Psoas muscle (tissue), 8 donors: ENCODE measurements at regions of chr4 and their contacts with region 1.

Region 1: DNA sequence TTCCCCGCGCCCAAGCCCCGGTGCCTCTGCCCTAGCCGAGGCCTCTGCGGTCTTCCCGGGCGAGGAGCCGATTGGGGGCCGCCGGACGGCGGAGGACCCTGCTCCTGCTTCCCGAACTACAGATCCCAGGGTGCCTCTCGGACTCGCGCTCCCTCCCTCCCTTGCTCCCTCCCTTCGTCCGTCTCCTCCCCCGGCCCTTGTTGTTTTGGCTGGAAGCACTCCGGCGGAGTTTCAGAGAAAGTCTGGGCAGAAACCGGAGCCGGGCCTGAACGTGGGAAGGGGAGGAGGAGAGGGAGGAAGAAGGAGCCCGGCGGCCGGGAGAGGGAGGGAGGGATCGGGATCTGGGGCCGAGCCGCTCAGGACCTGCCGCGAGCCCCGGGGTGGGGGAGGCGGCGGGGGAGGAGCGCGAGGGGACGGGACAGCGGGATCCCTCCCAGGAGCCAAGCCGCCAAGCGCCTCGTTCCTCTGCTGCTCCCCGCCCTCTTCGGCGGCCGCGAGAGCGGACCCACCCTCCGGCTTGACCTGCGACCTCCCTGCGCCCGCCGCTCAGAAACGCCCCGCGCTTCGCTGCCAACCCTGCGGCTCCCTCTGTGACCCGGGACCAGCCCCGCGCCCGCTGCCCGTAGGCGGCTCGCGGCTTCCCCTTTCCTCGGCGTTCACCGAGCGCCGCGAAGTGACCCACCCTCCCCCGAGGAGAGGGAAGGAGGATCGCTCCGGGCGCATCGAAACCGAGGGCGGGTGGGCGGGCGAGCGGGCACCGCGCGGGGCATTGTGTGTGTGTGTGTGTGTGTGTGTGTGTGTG is 496 bp upstream of the GAB1 start:
- DNase-seq: peak; percentile 89 to 93
- ATAC-seq: peak; percentile 86 to 88 (median 86)
- H3K4me3 ChIP-seq: peak overlapping the region; percentile 97
- H3K27ac ChIP-seq: peak overlapping the region; percentile 97
- H3K4me1 ChIP-seq: peaks cover 27% of the 10 kb centered on the region
- H3K27me3 ChIP-seq: no peaks in the 10 kb centered on the region
- CTCF ChIP-seq: no peak

Region 2: GRCh38 chr4:143133977-143134376 is 202.2 kb before region 1 on chr4:
- intact Hi-C with region 1: no loop called
- DNase-seq: no peak
- ATAC-seq: no peak
- H3K4me3 ChIP-seq: no peak overlapping the region
- H3K27ac ChIP-seq: no peak overlapping the region
- H3K4me1 ChIP-seq: no peaks in the 10 kb centered on the region
- H3K27me3 ChIP-seq: no peaks in the 10 kb centered on the region
- CTCF ChIP-seq: no peak

Region 3: GRCh38 chr4:143148521-143148920 is 187.7 kb before region 1 on chr4:
- intact Hi-C with region 1: no loop called
- DNase-seq: no peak
- ATAC-seq: no peak
- H3K4me3 ChIP-seq: no peak overlapping the region
- H3K27ac ChIP-seq: no peak overlapping the region
- H3K4me1 ChIP-seq: no peaks in the 10 kb centered on the region
- H3K27me3 ChIP-seq: no peaks in the 10 kb centered on the region
- CTCF ChIP-seq: no peak

Region 4: GRCh38 chr4:143207557-143207956 is 128.6 kb before region 1 on chr4:
- intact Hi-C with region 1: loop called in 1 of 2 experiments (anchors 5 kb)
- DNase-seq: no peak
- ATAC-seq: peak in 2 of 4 donors; percentile 60 to 68
- H3K4me3 ChIP-seq: no peak overlapping the region
- H3K27ac ChIP-seq: peak overlapping the region; percentile 27
- H3K4me1 ChIP-seq: peaks cover 35% of the 10 kb centered on the region
- H3K27me3 ChIP-seq: no peaks in the 10 kb centered on the region
- CTCF ChIP-seq: peak; percentile 45

Region 5: GRCh38 chr4:143224255-143224654 is 111.9 kb before region 1 on chr4:
- intact Hi-C with region 1: loop called (anchors 5 to 10 kb)
- DNase-seq: no peak
- ATAC-seq: peak; percentile 77 to 89 (median 85)
- H3K4me3 ChIP-seq: peak overlapping the region; percentile 12
- H3K27ac ChIP-seq: peak overlapping the region; percentile 67
- H3K4me1 ChIP-seq: peaks cover 33% of the 10 kb centered on the region
- H3K27me3 ChIP-seq: no peaks in the 10 kb centered on the region
- CTCF ChIP-seq: no peak

Region 6: DNA sequence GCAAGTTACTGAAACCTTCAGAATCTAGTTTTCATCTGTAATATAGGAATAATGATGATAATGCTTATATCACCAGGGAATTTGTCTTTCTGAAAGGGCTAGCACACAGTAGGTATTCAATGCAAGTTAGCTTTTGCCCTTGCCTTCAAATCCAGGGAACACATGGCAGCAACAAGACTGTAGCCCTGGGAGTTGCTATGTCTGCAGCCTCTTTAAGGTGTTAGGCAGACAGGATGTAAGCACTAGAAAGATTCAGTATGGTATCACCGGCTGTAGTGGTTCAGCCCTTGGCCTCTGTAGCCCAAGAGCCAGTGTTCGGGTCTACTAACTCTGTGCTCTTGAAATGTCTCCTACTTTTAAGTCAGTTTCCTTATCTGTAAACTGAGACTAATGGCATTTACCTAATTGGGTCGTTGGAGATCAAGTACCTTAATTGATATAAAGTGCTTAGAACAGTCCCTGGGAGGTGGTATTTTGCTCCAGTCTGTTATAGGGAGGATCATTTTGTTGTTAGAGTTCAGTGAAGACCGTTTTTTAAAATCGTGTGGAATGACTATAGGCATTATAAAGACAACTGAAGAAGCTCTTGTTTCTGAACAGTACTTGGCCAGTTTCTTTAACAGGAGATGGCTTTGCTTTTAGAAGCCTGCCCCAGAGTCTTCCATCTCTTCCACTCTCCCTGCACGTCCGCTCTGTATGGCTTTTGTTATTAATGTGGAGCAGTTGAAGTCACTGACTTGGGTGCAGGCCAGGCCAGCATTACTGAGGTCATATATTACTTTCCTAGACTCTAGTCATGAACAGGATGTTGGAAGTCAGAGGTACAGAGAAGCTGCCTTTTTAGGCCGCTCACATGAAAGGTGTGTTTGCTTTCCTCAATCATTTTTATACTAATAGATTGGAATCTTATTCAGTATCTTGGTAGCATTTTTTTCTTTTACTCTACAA is 45.3 kb after region 1 on chr4:
- intact Hi-C with region 1: loop called in 1 of 2 experiments (anchors 5 kb)
- DNase-seq: peak; percentile 80 to 81
- ATAC-seq: peak; percentile 77 to 81 (median 80)
- H3K4me3 ChIP-seq: peak overlapping the region; percentile 30
- H3K27ac ChIP-seq: peak overlapping the region; percentile 85
- H3K4me1 ChIP-seq: peaks cover 92% of the 10 kb centered on the region
- H3K27me3 ChIP-seq: no peaks in the 10 kb centered on the region
- CTCF ChIP-seq: no peak

Region 7: DNA sequence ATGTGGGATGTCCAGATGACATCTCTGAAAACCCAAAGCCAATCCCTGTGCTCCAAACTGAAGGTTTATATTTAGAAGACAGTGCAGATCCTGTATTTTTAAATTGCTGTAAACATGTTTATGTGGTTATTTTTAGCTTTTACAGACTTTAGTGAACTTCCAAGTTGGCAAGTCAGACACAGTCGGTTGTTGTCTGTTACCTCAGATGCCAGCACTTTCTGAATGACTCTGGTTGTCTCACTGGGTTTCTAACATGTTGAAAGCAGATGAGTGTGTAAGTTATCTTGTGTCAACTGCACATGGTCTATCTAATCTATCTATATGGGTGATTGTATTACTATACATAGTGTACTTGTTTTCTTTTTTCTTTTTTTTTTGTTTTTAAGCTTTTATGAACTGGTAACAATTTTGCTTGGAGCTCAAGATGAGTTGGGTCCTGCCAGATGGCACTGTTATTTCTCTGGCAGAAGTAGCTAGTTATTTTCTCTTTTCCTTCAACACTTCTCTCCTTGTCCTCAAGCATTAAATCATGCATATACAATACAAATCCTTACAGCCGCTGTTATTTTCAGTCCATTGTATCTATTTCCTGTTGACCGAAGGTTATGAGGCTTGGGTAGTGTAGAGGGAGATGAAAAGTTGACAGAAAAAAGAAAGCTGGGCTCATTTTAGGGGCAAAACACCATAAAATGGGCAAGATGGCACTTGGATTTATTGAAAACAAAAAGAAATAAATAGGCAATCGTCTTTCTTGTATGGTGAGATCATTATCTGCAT is 66.8 kb after region 1 on chr4:
- intact Hi-C with region 1: loop called in 1 of 2 experiments (anchors 5 kb)
- DNase-seq: no peak
- ATAC-seq: peak; percentile 88 to 94 (median 93)
- H3K4me3 ChIP-seq: peak overlapping the region; percentile 54
- H3K27ac ChIP-seq: peak overlapping the region; percentile 94
- H3K4me1 ChIP-seq: peaks cover 85% of the 10 kb centered on the region
- H3K27me3 ChIP-seq: no peaks in the 10 kb centered on the region
- CTCF ChIP-seq: no peak

Region 8: DNA sequence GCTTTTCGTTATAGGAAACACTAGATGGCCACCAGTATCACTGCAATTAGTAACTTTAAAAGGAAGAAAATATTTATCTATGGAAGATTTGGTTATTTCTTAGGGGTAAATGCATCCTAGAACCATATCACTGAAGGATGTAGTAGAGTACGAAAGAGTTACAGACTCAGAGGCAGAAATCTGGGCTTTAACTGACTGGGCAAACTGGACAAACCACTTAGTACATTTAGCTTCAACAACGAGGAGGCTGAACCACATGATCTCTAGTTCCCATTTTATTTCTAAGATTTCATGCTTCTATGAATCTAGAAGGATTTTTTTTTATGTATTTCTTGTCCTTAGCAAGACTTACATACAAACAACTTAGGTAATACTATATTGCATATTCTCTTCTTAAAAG is 270.3 kb after region 1 on chr4:
- intact Hi-C with region 1: no loop called
- DNase-seq: no peak
- ATAC-seq: no peak
- H3K4me3 ChIP-seq: no peak overlapping the region
- H3K27ac ChIP-seq: no peak overlapping the region
- H3K4me1 ChIP-seq: no peaks in the 10 kb centered on the region
- H3K27me3 ChIP-seq: no peaks in the 10 kb centered on the region
- CTCF ChIP-seq: no peak

Region 9: GRCh38 chr4:143986180-143986579 is 650.0 kb after region 1 on chr4:
- intact Hi-C with region 1: no loop called
- DNase-seq: no peak
- ATAC-seq: no peak
- H3K4me3 ChIP-seq: no peak overlapping the region
- H3K27ac ChIP-seq: no peak overlapping the region
- H3K4me1 ChIP-seq: no peaks in the 10 kb centered on the region
- H3K27me3 ChIP-seq: no peaks in the 10 kb centered on the region
- CTCF ChIP-seq: no peak